Activated B cell treated with CpG ODN at 0.5 μM for 24 hours (primary cell): ENCODE measurements at regions of chr12 and their contacts with region 1.

Region 1: DNA sequence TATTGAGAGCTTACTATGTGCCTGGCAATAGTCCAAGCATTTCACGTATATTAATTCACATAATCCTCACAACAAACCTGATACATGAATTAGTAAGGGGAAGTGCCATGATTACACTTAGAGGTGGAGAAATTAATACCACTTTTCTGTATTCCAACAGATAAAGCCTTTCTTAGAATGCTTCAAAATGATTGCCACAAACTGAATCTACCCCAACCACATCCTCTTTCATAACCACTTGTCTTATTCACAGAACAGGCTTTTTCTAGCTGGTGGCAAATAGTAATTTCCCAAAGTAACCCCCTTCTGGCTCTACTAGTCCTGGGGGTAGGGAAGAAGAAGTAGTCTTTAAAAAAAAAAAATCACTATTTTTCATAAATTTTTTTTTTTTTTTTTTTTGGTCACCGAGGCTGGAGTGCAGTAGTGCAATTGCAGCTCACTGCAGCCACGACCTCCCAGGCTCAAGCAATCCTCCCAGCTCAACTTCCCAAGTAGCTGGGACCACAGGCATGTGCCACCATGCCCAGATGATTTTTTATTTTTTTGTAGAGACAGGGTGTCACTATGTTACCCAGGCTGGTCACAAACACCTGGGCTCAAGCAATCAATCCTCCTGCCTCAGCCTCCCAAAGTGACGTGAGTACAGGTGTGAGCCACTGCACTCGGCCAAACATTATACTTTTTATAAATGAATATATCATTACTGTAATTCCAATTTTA is 59.0 kb upstream of the ARID2 start:
- DNase-seq: no peak
- ATAC-seq: peak; percentile 59
- H3K4me3 Mint-ChIP-seq: no peak overlapping the region
- H3K27ac Mint-ChIP-seq: peak overlapping the region; percentile 13
- H3K4me1 Mint-ChIP-seq: peaks cover 27% of the 10 kb centered on the region
- H3K27me3 Mint-ChIP-seq: no peaks in the 10 kb centered on the region
- CTCF ChIP-seq: no peak

Region 2: GRCh38 chr12:45575823-45576475 is 94.6 kb before region 1 on chr12:
- CTCF ChIA-PET with region 1: no interaction called
- POLR2A ChIA-PET with region 1: no interaction called
- intact Hi-C with region 1: loop called (anchors 1 kb)
- DNase-seq: no peak
- ATAC-seq: peak; percentile 76
- H3K4me3 Mint-ChIP-seq: peak overlapping the region; percentile 61
- H3K27ac Mint-ChIP-seq: peak overlapping the region; percentile 78
- H3K4me1 Mint-ChIP-seq: peaks cover 44% of the 10 kb centered on the region
- H3K27me3 Mint-ChIP-seq: no peaks in the 10 kb centered on the region
- CTCF ChIP-seq: no peak

Region 3: GRCh38 chr12:45707241-45707857 is 36.8 kb after region 1 on chr12:
- CTCF ChIA-PET with region 1: no interaction called
- POLR2A ChIA-PET with region 1: interaction called, 5 read pairs
- intact Hi-C with region 1: loop called (anchors 2 kb)
- DNase-seq: no peak
- ATAC-seq: no peak
- H3K4me3 Mint-ChIP-seq: no peak overlapping the region
- H3K27ac Mint-ChIP-seq: no peak overlapping the region
- H3K4me1 Mint-ChIP-seq: peaks cover 27% of the 10 kb centered on the region
- H3K27me3 Mint-ChIP-seq: no peaks in the 10 kb centered on the region
- CTCF ChIP-seq: no peak